ENCODE measurements at regions of chr16 and their contacts with region 1.

Region 1: DNA sequence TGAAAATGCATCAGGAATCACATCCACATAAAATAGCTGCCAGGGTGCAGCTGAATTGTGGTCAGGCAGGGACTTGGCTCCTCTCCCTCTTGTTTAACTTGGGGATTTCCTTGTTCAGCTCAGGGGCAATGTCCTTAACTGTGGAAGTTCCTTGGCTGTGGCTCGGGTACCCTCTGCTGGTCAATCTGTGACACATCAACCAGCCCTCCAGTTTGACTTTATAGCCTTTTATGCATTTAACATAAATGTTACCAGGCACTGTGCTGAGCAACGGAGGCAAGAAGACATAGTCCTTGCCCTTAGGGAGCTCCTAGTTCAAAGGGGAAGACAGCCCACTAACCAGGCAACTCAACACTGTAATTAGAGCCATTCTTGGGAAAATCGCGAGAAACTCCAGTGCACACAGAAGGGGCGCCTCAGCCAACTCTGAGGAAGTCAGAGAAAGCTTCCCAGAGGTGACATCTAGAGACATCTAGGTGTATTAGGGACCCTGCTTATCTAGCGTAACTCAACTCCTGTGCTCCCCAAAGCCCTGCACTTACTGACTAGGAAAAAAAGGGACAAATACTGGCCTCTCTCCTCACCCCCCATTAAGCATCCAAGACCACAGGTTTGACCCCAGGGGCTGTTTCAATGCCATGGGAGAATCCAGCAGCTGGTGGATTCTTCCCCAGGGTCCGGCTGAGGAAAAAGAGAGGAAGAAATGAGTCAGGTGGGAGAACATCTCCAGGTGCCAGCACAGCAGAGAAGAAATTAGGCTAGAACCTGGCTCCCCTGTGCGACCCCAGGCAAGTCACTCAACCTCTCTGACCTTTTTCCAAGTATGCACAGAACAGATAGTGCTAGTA is 17.3 kb upstream of the EEF2K start:
- DNase-seq: peak; percentile 78 to 94
- H3K4me3 ChIP-seq: peak overlapping the region in 1 of 4 donors; percentile 78
- H3K27ac ChIP-seq: peak overlapping the region; percentile 95 to 98 (median 98)
- H3K4me1 ChIP-seq: peaks cover 35 to 46% (median 40%) of the 10 kb centered on the region in 4 donors
- H3K27me3 ChIP-seq: no peaks in the 10 kb centered on the region
- CTCF ChIP-seq: peak in 5 of 7 experiments; percentile 75 to 86 (median 83)
- EP300 ChIP-seq: no peak
- POLR2A ChIP-seq: no peak

Region 2: GRCh38 chr16:21599233-21600030 is 589.4 kb before region 1 on chr16 and contains the start of gene METTL9:
- intact Hi-C with region 1: loop called (anchors 10 kb)
- DNase-seq: peak; percentile 96 to 99
- H3K4me3 ChIP-seq: peak within 1 kb of the TSS; percentile 77 to 98 (median 91)
- H3K27ac ChIP-seq: peak within 1 kb of the TSS; percentile 94 to 98 (median 97)
- H3K4me1 ChIP-seq: peaks cover 15 to 55% (median 35%) of the 10 kb centered on the region in 4 donors
- H3K27me3 ChIP-seq: no peaks in the 10 kb centered on the region
- CTCF ChIP-seq: peak in 1 of 7 experiments; percentile 8
- EP300 ChIP-seq: no peak
- POLR2A ChIP-seq: no peak
- total RNA-seq, gene METTL9: 82.1 to 879 (median 188) TPM

Region 3: DNA sequence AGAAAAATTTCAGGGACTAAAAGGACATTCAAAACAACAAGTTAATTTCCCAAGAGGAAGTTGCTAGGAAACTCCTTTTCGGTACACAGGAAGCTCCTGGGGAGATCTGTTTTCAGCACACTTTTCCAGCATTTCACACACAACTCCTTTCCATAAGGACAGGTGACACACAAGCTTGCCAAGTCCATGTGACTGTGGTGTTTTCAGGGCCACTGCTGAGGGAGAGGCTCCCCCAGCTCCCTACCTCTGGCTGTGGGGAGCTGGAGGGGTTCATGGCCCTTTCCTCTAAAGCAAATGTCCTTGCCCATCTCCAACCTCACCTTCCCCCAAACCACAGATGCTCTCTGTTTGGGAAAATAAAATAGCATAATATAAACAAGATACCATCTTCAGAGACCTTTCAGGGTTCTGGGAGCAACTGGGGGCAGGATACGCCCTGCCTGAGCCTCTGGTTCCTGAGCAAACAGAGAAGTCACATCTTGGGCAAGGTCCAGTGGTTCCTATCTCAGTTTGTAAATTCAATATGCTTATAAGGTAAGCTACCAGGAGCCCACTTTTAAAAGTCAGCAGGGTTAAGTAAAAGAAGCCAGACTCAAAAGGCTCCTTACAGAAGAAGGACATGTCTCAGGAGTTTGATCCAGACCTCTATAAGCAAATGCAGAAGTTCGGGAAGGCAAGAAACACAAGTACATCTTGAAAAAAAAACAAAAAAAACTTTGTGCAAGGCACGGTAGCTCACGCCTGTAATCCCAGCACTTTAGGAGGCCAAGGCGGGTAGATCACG is 190.9 kb before region 1 on chr16:
- intact Hi-C with region 1: loop called (anchors 5 kb)
- DNase-seq: peak in 1 of 2 donors; percentile 19
- H3K4me3 ChIP-seq: no peak overlapping the region
- H3K27ac ChIP-seq: peak overlapping the region in 2 of 5 donors; percentile 34 to 41
- H3K4me1 ChIP-seq: peaks cover 5 to 15% (median 11%) of the 10 kb centered on the region in 4 donors
- H3K27me3 ChIP-seq: no peaks in the 10 kb centered on the region
- CTCF ChIP-seq: no peak
- EP300 ChIP-seq: no peak
- POLR2A ChIP-seq: no peak